ENCODE measurements at regions of chr7 and their contacts with region 1.

Region 1: DNA sequence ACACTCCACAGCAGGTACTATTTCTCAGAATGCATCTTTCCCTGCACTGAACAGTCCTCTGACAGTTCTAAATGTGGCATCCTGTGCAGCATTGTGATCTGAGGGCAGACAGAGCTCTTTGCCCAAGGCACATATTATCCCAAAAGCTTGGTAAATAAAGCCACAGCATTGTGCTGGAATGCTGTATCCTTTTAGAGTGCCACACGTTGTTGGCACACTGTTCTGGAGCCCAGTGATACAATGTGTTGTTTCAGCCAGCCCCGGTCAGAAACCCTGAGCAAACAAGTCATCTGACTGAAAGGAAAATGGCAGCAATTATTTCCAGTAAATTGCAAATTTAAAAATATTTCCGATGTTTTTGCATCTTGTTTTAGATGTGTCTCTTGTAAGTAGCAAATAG is 45.4 kb downstream of the NAMPT start:
- DNase-seq: peak; percentile 39 to 57
- H3K4me3 ChIP-seq: no peak overlapping the region
- H3K27ac ChIP-seq: no peak overlapping the region
- H3K4me1 ChIP-seq: 0 out of 2 replicates have a peak, but pooled peaks cover 11% of the 10 kb centered on the region
- H3K27me3 ChIP-seq: no peaks in the 10 kb centered on the region
- CTCF ChIP-seq: no peak

Region 2: DNA sequence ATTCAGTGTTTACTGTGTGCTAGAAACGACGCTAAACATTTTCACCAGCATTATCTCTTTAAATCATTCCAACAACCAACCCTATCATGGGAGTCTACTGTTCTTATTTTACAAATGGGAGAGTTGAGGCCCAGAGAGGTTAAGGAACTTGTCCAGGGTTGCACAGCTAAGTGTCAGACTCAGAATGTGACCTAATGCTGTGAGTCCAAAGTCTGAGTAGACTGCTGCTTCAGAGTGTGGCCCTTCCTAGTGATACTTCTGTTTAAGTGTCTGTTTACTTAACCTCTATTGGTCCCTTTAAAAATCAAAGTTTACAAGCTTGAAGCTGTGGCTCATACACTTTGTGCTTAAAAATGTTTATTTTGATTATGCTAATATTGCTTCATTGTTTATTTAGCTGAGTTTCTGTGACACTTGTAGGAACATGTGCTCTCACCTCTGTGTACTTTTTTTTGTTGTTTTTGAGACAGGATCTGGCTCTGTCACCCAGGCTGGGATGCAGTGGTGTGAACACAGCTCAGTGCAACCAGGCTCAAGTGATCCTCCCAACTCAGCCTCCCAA is 42.9 kb before region 1 on chr7:
- CTCF ChIA-PET with region 1: no interaction called
- POLR2A ChIA-PET with region 1: no interaction called
- intact Hi-C with region 1: no loop called
- DNase-seq: peak in 1 of 2 experiments; percentile 36
- H3K4me3 ChIP-seq: no peak overlapping the region
- H3K27ac ChIP-seq: no peak overlapping the region
- H3K4me1 ChIP-seq: no peaks in the 10 kb centered on the region
- H3K27me3 ChIP-seq: no peaks in the 10 kb centered on the region
- CTCF ChIP-seq: no peak

Region 3: DNA sequence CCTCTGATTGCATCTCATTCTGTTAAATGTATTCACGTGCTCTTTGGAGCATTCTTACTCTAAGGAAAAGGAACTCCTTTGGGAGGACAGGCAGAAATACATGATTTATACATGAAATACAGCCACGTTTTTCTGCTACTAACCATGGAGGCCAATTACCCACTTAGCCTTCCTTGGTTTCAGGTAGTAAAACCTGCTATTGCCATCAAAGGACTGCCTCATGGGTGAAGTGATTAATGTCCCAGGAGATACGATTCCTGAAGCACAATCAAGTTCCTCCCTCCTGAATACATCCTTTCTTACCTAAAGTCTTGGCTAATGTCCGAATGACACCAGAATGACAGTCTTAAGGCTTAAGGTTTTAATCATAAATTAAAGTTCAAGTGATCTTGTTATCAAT is 567.2 kb after region 1 on chr7:
- CTCF ChIA-PET with region 1: no interaction called
- POLR2A ChIA-PET with region 1: interaction called, 10 read pairs
- intact Hi-C with region 1: no loop called
- DNase-seq: no peak
- H3K4me3 ChIP-seq: no peak overlapping the region
- H3K27ac ChIP-seq: no peak overlapping the region
- H3K4me1 ChIP-seq: no peaks in the 10 kb centered on the region
- H3K27me3 ChIP-seq: no peaks in the 10 kb centered on the region
- CTCF ChIP-seq: no peak